ENCODE measurements at regions of chr4 and their contacts with region 1.

Region 1: GRCh38 chr4:95118497-95118896 is 360.7 kb downstream of the BMPR1B start:
- DNase-seq: no peak
- H3K4me3 ChIP-seq: no peak overlapping the region
- H3K27ac ChIP-seq: peak overlapping the region in 1 of 2 experiments; percentile 64; a peak in 1 of 4 replicates
- H3K4me1 ChIP-seq: peaks cover 0 to 11% of the 10 kb centered on the region in 2 experiments; a peak in 2 of 4 replicates
- H3K27me3 ChIP-seq: no peaks in the 10 kb centered on the region
- CTCF ChIP-seq: no peak
- EP300 ChIP-seq: no peak
- RAD21 ChIP-seq: no peak

Region 2: GRCh38 chr4:95105112-95105511 is 13.4 kb before region 1 on chr4:
- CTCF ChIA-PET with region 1: interaction called, 11 read pairs
- POLR2A ChIA-PET with region 1: no interaction called
- DNase-seq: no peak
- H3K4me3 ChIP-seq: no peak overlapping the region
- H3K27ac ChIP-seq: no peak overlapping the region
- H3K4me1 ChIP-seq: peaks cover 7 to 16% of the 10 kb centered on the region in 2 experiments
- H3K27me3 ChIP-seq: no peaks in the 10 kb centered on the region
- CTCF ChIP-seq: no peak
- EP300 ChIP-seq: no peak
- RAD21 ChIP-seq: no peak